ENCODE measurements at regions of chr11 and their contacts with region 1.

Region 1: GRCh38 chr11:75248690-75249268 is 8.2 kb downstream of the TPBGL start:
- DNase-seq: peak; percentile 84
- H3K4me3 ChIP-seq: no peak overlapping the region
- H3K27ac ChIP-seq: no peak overlapping the region
- H3K4me1 ChIP-seq: no peaks in the 10 kb centered on the region
- H3K27me3 ChIP-seq: no peaks in the 10 kb centered on the region
- CTCF ChIP-seq: peak; percentile 88 to 98 (median 97)
- POLR2A ChIP-seq: no peak

Region 2: DNA sequence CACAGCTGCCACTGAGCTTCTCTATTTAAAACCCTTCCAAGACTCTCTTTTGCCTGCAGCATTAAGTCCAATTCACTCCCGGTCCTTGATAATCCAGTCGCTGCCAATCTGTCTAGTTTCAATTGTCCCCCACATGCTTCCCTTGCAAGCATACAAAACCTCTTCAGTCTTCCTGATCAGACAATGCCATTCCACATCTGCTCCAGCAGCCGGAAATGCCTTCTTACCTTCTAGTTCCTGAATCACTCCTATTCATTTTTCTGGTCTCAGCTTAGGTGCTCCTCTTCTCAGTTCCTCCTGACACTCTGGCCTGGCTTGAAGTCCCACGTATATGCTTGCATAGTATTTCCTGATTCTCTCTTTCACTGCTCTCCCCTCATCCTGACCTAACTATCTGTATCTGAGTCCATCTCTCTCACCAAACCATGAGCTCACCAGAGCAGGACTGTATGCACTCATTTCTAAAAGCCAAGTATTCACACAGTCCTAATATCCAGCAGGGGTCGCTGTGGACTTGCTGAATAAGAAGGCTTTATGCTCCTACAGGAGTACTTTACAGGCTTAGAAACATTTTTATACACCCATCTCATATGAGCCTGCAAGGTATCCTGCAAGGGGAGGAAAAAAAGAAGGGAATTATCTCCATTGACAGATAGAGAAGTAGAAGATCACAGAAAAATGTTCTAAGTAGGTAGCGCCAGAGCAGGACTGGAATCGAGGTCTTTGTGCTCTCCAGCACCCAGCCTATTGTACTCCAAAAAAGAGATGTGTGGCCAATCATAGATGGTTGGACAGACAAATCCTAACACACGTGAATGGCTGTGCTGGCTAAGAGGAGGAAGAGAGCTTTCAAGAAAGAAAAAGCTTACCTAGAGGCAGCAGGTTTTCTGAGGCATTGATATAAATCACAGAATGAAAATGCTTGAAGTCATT is 319.1 kb before region 1 on chr11:
- intact Hi-C with region 1: loop called (anchors 5 kb)
- DNase-seq: peak; percentile 83
- H3K4me3 ChIP-seq: no peak overlapping the region
- H3K27ac ChIP-seq: no peak overlapping the region
- H3K4me1 ChIP-seq: no peaks in the 10 kb centered on the region
- H3K27me3 ChIP-seq: no peaks in the 10 kb centered on the region
- CTCF ChIP-seq: peak; percentile 69 to 89 (median 86)
- POLR2A ChIP-seq: no peak

Region 3: DNA sequence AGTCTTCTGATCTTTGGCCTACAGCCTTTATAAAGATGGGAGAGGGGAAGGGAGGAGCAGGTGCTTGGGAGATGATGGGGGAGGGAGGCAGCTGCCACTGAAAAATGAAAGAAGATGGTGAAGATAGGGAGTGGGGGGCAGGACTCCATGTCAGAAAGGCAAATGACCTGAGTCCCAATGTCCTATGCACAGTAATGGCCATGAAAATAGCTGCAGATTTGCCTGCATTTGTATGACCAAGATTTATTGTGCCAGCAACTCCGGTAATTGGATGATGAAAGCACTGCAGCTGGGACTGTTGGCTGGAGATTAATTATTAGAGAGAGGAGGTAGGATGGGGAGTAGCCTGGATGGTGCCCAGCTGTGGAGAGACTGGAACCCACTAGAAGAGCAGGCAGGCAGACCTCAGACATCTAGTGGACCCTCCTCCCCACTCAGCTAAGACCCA is 224.0 kb before region 1 on chr11:
- intact Hi-C with region 1: loop called (anchors 2 kb)
- DNase-seq: no peak
- H3K4me3 ChIP-seq: no peak overlapping the region
- H3K27ac ChIP-seq: no peak overlapping the region
- H3K4me1 ChIP-seq: no peaks in the 10 kb centered on the region
- H3K27me3 ChIP-seq: no peaks in the 10 kb centered on the region
- CTCF ChIP-seq: no peak
- POLR2A ChIP-seq: no peak

Region 4: GRCh38 chr11:75096456-75097172 is 152.2 kb before region 1 on chr11 and contains the start of gene OR2AT4:
- intact Hi-C with region 1: no loop called
- DNase-seq: no peak
- H3K4me3 ChIP-seq: no peak within 1 kb of the TSS
- H3K27ac ChIP-seq: no peak within 1 kb of the TSS
- H3K4me1 ChIP-seq: no peaks in the 10 kb centered on the region
- H3K27me3 ChIP-seq: no peaks in the 10 kb centered on the region
- CTCF ChIP-seq: no peak
- POLR2A ChIP-seq: no peak
- total RNA-seq, gene OR2AT4: 0.11 TPM in 1 of 2 donors, not detected in the other

Region 5: GRCh38 chr11:75142714-75143419 is 105.9 kb before region 1 on chr11:
- intact Hi-C with region 1: loop called (anchors 1 kb)
- DNase-seq: no peak
- H3K4me3 ChIP-seq: no peak overlapping the region
- H3K27ac ChIP-seq: no peak overlapping the region
- H3K4me1 ChIP-seq: no peaks in the 10 kb centered on the region
- H3K27me3 ChIP-seq: no peaks in the 10 kb centered on the region
- CTCF ChIP-seq: no peak
- POLR2A ChIP-seq: no peak

Region 6: DNA sequence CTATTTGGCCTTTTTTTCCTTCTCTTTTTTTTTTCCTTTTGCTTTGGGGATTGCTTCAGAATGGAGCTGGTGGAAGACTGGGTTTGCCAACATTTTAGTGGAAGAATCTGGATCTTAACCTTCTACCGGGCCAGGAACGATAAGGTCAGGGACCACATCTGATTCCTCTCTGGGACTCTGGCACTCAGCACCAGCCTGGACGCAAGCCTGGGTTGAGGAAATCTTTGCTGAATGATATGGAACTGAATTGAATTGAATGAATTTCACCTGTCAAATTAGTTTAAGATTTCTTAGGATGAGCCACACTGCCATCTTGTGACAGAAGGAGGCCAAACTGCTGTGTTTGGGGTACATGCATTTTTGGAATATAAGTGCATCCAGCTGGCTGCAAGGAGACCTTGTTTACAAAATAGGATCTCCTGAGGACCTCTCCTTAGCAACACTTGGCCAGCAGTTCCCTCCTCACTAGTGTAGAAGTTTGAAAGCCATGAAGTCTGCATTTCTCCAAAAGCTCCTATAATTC is 22.2 kb after region 1 on chr11:
- intact Hi-C with region 1: no loop called
- DNase-seq: no peak
- H3K4me3 ChIP-seq: no peak overlapping the region
- H3K27ac ChIP-seq: no peak overlapping the region
- H3K4me1 ChIP-seq: no peaks in the 10 kb centered on the region
- H3K27me3 ChIP-seq: no peaks in the 10 kb centered on the region
- CTCF ChIP-seq: no peak
- POLR2A ChIP-seq: no peak

Measured in prostate gland (tissue), 2 donors.